Common myeloid progenitor, CD34-positive (primary cell): ENCODE measurements at regions of chr22 and their contacts with region 1.

Region 1: DNA sequence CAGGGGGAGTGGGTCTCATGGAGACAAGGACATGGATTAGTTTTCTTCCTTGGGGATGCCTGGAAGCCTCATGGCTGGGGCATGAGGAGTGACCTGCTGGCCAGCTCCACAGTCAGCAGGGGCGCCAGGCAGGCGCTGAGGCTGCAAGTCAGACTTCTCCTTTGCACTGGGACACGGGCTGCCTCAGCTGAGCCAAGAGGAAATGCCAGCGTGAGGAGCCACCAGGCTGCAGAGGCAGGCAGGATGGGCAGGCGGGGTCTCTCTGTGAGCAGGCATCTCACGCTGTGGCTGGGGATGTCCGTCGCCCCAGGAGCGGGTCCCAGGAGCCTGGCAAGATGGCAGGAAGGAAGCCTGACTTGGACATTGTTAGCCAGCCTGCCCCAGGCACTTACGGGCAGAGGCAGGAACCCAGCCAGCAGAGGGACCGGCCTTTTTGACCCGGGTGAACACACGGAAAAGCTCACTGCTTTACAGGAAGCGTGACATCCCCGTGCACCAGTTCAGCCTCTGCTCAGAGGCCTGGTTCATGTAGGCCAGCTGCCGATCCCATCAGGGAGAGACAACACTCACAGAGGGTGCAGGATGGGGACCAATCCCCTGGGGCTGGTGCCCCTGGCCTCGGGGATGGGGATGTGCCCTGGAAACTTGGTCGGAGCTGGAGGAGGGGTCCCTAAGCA is 10.2 kb downstream of the GNB1L start:
- DNase-seq: peak; percentile 50 to 85 (median 79)
- H3K4me3 ChIP-seq: peak overlapping the region in 5 of 7 experiments; percentile 30 to 62 (median 57)
- H3K27ac ChIP-seq: no peak overlapping the region
- H3K4me1 ChIP-seq: peaks cover 0 to 23% (median 21%) of the 10 kb centered on the region in 4 experiments
- H3K27me3 ChIP-seq: no peaks in the 10 kb centered on the region

Region 2: DNA sequence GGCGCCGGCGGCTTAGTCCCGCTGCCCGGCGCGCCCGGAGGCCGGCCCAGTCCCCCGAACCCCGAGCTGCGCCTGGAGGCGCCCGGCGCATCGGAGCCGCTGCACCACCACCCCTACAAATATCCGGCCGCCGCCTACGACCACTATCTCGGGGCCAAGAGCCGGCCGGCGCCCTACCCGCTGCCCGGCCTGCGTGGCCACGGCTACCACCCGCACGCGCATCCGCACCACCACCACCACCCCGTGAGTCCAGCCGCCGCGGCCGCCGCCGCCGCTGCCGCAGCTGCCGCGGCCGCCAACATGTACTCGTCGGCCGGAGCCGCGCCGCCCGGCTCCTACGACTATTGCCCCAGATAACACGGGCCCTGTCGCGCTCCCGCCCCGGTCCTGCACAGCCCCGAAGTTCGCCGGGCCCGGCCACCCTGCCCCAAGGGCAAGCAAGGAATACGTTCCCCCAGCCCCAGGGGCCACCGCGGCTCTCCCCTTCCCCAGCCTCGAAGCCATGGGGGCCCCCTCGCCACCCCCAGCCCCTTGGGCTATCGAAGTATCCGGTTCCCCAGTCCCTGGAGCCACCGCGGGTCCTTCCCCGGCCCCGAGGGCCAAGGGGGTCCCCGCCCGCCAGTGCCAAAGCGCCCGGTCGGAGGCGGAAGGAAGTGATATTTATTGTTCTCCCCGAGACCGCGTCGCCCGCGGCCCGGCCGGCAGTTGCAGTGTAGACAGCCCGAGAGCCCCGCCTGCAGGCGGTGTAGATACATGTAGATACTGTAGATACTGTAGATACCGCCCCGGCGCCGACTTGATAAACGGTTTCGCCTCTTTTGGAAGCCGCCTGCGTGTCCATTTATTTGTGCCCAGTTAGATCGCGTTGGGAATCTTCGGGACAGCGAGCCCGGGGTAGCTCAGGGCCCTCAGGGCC is 77.7 kb before region 1 on chr22:
- CTCF ChIA-PET with region 1: no interaction called
- POLR2A ChIA-PET with region 1: no interaction called
- DNase-seq: peak; percentile 81 to 92 (median 90)
- H3K4me3 ChIP-seq: peak overlapping the region in 6 of 7 experiments; percentile 10 to 59 (median 50)
- H3K27ac ChIP-seq: no peak overlapping the region
- H3K4me1 ChIP-seq: peaks cover 0 to 37% (median 30%) of the 10 kb centered on the region in 4 experiments
- H3K27me3 ChIP-seq: peaks cover 0 to 88% (median 45%) of the 10 kb centered on the region in 5 experiments

Region 3: DNA sequence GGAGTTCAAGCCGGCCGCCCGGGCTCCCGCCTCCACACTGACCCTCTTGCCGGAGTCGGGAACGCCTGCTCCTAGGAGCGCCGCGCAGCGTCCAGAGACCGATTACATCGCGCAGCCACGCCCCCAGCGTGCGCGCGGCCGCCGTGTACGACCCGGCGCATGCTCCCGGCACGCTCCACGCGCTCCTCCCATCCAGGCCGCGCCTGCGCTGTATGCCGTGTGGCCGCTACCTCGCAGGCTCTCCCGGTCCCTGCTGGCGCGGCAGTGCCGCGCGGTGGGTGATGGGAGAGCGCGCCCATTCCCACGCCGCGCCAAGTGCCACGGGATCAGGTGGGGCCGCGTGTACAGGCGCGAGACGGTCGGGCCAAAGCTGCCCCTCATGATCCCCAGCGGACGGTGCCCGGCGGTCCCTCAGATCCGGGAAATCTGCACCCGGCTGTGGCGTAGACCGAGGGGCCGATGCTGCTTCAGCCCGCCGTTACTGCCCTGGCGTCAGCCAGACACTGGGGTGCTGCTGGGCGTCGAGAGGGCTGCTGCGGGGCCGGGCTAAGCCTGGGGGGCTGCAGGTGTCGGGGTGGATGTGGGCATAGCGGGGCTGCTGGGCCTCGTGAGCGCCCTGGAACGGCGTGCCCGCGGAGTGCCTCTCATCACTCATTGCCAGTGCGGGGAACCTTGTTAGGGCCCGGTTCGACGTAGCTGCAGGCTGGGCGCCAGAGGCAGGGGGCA is 10.4 kb after region 1 on chr22 and contains the starts of genes GNB1L and RTL10:
- CTCF ChIA-PET with region 1: interaction called, 13 read pairs
- POLR2A ChIA-PET with region 1: no interaction called
- DNase-seq: peak; percentile 94 to 96 (median 95)
- H3K4me3 ChIP-seq: peak within 1 kb of the TSS; percentile 86 to 97 (median 92)
- H3K27ac ChIP-seq: peak within 1 kb of the TSS; percentile 72 to 92
- H3K4me1 ChIP-seq: peaks cover 0 to 36% (median 31%) of the 10 kb centered on the region in 4 experiments
- H3K27me3 ChIP-seq: no peaks in the 10 kb centered on the region